ENCODE measurements at regions of chr2 and their contacts with region 1.

Region 1: GRCh38 chr2:20675701-20676352 is 8.9 kb downstream of the GDF7 start:
- DNase-seq: peak in 2 of 3 donors; percentile 59 to 61
- H3K4me3 ChIP-seq: no peak overlapping the region
- H3K27ac ChIP-seq: no peak overlapping the region
- H3K4me1 ChIP-seq: peaks cover 0 to 21% (median 9%) of the 10 kb centered on the region in 4 experiments
- H3K27me3 ChIP-seq: peaks cover 0 to 39% (median 20%) of the 10 kb centered on the region in 5 experiments

Region 2: DNA sequence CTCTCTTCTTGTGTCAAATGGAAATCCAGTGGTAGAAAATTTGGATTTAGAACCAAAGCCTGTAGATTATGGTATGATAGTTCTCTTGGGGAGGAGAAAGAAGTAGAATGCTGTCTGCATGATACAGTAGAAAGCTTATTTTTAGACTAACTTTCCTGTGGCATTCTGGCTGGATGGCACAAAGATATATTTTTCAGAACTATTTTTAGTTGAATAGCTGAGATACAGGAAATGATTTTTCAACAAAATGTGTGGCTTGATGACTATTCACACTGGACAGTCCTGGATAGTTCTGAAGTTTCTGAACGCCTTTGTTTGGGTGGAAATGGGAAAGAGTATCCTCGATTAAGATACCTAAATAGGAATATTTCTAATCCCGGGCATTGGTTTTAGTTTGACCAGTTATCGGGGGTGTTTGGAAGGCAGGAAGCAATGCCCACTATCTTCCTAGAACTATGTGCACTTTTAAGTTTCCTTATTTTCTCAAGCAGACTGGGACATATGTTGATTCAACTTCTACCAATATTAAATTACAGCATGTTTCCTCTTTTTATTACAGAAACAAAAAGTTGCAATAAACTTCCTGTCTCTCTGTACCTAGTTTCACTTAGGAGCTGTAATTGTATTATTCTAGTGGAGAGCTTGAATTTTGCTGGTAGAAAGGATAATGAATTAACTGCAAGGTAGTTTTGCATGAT is 23.2 kb after region 1 on chr2:
- CTCF ChIA-PET with region 1: interaction called, 21 read pairs
- POLR2A ChIA-PET with region 1: no interaction called
- DNase-seq: peak in 2 of 3 donors; percentile 35 to 52
- H3K4me3 ChIP-seq: peak overlapping the region in 6 of 7 experiments; percentile 12 to 70 (median 32)
- H3K27ac ChIP-seq: peak overlapping the region; percentile 60 to 72
- H3K4me1 ChIP-seq: peaks cover 13 to 28% (median 14%) of the 10 kb centered on the region in 4 experiments
- H3K27me3 ChIP-seq: no peaks in the 10 kb centered on the region

Measured in common myeloid progenitor, CD34-positive (primary cell).